Activated T-helper 1 cell treated with anti-CD3 and anti-CD28 coated beads, Interleukin-12 subunit alpha, Interleukin-12 subunit beta, Interleukin-2, Interleukin-4 antibody, amounts not matched to agents 30 ng/mL and 10 ng/mL and 1 ng/mL, durations not matched to agents 14 hours and 24 hours and 36 hours (primary cell): ENCODE measurements at regions of chr12 and their contacts with region 1.

Region 1: GRCh38 chr12:100741084-100741711 is 53.4 kb upstream of the ANO4 start:
- DNase-seq: no peak
- H3K4me3 Mint-ChIP-seq: no peak overlapping the region
- H3K27ac Mint-ChIP-seq: no peak overlapping the region
- H3K4me1 Mint-ChIP-seq: no peaks in the 10 kb centered on the region
- H3K27me3 Mint-ChIP-seq: no peaks in the 10 kb centered on the region

Region 2: GRCh38 chr12:100668945-100669536 is 72.2 kb before region 1 on chr12:
- intact Hi-C with region 1: loop called (anchors 1 kb)
- DNase-seq: peak; percentile 10
- H3K4me3 Mint-ChIP-seq: no peak overlapping the region
- H3K27ac Mint-ChIP-seq: no peak overlapping the region
- H3K4me1 Mint-ChIP-seq: no peaks in the 10 kb centered on the region
- H3K27me3 Mint-ChIP-seq: no peaks in the 10 kb centered on the region